Psoas muscle (tissue), 8 donors: ENCODE measurements at regions of chr2 and their contacts with region 1.

Region 1: DNA sequence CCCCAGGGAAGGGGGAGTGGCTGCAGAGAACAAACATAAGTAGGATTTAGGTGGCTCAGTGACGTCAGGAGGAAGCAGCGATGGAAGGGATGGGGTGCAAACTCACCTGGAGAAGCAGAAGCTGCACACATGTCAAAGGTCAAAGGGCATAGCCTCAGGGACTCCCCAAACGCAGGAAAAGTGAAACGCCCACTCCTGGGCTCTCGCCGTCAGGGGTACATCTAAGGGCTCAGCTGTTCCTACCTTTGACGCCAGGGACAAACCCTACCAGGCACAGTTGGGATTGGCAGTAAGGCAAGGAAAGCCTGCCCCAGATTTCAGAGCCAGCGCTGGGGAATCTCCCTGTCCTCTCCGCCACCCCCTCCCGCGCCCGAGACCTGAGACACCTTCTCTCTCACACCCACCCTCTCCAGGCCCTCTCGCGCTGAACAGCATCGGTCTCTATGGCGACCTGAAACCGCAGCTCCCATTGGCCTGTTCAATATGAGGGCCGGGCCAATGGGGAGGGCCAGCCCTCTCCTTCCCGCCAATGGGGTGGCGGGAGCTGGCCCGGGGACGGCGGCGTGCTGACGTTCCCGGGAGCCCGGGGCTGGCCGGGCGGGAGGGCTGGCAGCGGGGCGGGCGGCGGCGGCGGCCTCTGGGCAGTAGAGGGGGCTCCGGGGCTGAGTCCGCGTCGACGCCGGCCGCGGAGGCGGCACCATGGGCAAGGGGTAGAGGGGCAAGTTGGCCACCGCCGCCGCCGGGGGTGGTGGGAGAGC is at the starts of genes CCDC148 and PKP4:
- DNase-seq: peak; percentile 88 to 91
- ATAC-seq: peak; percentile 93 to 98 (median 96)
- H3K4me3 ChIP-seq: peak within 1 kb of the TSS; percentile 85
- H3K27ac ChIP-seq: peak within 1 kb of the TSS; percentile 91
- H3K4me1 ChIP-seq: peaks cover 22% of the 10 kb centered on the region
- H3K27me3 ChIP-seq: no peaks in the 10 kb centered on the region
- CTCF ChIP-seq: no peak
- total RNA-seq, gene CCDC148: not detected
- total RNA-seq, gene PKP4: 18.0 to 23.8 (median 21.0) TPM

Region 2: GRCh38 chr2:158473719-158474392 is 17.4 kb after region 1 on chr2:
- intact Hi-C with region 1: no loop called
- DNase-seq: no peak
- ATAC-seq: no peak
- H3K4me3 ChIP-seq: no peak overlapping the region
- H3K27ac ChIP-seq: no peak overlapping the region
- H3K4me1 ChIP-seq: peaks cover 5% of the 10 kb centered on the region
- H3K27me3 ChIP-seq: no peaks in the 10 kb centered on the region
- CTCF ChIP-seq: no peak

Region 3: GRCh38 chr2:158624961-158625360 is 168.5 kb after region 1 on chr2:
- intact Hi-C with region 1: loop called in 1 of 2 experiments (anchors 10 kb)
- DNase-seq: no peak
- ATAC-seq: no peak
- H3K4me3 ChIP-seq: no peak overlapping the region
- H3K27ac ChIP-seq: no peak overlapping the region
- H3K4me1 ChIP-seq: no peaks in the 10 kb centered on the region
- H3K27me3 ChIP-seq: no peaks in the 10 kb centered on the region
- CTCF ChIP-seq: no peak